ENCODE measurements at regions of chr2 and their contacts with region 1.

Region 1: DNA sequence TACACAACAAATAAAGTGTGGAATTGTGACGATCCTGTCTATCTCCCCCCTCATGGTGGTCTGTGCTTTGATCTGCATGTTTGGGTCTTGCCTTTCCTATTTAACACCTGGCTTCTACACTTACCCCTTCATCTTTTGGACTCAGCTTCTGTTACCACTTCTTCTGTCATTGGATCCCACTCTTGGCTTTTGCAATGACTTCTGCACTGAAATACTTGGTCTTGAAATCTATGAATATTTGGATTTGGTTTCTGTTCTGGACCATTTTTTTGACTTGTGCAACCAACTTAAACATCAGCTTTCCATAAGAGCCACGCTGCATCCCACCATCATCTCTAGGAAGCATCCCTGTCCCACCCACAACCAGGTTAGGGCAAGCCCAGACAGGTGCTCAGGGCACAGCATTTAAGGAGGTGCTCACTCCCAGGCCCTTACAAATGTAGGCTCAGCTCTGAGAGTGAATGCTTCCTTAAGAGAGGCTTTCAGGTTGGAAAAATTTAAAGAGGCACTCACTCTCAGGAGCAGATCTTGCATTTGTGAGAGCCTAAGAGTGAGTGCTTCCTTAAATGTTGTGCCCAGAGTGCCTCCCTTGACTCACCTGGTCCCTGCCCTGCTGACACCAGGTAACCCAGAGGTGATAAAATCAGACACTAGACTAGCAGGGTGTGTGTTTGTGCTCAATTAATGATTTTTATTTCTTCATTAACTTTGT is 124.6 kb upstream of the SH3BP4 start:
- DNase-seq: no peak

Region 2: DNA sequence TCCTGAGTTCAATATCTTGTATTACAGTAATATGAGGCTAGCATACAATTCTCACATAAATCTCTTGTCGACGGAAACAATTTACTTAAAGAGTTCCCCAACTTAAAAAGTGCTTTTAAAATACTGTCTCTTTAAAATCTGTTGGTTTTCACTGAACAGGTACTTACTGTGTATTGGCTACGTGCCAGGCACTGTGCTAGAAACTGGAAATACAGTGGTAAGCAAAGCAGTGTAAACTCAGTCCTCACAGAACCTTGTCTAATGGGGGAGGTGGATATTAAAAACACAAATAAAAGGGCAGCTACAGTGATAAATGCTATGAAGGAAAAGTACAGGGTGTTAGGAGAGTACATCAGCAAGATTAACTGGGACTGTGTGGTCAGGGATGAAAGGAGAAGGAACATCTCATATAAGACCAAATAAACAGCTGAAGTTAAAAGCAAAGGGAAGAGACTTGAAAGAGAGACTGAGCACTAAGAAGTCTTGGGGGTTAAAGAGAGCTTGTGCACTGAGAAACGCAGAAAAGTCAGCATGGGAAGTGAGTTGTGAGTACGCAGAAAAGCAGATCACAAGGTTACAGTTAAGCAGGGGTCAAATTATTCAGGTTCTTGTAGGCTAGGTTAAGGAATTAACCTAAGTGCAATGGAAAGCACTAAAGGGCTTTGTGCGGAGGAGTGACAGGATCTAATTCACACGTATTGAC is 1313.1 kb before region 1 on chr2:
- intact Hi-C with region 1: loop called in 1 of 2 experiments (anchors 5 kb)
- DNase-seq: no peak

Region 3: DNA sequence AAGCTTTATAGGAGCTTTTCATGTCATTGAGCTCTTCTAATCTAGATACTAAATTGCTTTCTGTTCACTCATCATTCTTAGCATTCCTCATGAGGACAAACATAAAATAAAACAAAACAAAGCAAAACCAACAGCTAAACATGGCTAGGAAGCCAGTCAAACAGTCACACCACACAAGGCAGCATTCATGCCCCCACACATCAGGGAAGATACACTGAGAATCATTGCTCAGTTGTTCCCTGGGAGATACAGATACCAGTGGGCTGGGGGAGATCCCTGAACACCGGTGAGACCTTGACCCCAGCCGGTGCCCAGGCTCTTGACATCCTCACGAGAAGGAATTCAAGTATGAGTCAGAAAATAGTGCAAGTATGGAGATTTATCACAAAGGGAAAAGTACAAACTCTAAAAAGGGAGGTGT is 152.5 kb before region 1 on chr2:
- intact Hi-C with region 1: no loop called
- DNase-seq: no peak

Region 4: GRCh38 chr2:234861841-234862735 is 34.8 kb after region 1 on chr2:
- intact Hi-C with region 1: loop called in 1 of 2 experiments (anchors 2 kb)
- DNase-seq: no peak

Region 5: GRCh38 chr2:235534678-235535422 is 707.6 kb after region 1 on chr2:
- intact Hi-C with region 1: no loop called
- DNase-seq: peak; percentile 68

Measured in posterior vena cava (tissue), 2 donors.